Activated T-helper 1 cell treated with anti-CD3 and anti-CD28 coated beads, Interleukin-12 subunit alpha, Interleukin-12 subunit beta, Interleukin-2, Interleukin-4 antibody, amounts not matched to agents 30 ng/mL and 10 ng/mL and 1 ng/mL, durations not matched to agents 14 hours and 24 hours and 36 hours (primary cell): ENCODE measurements at regions of chr5 and their contacts with region 1.

Region 1: DNA sequence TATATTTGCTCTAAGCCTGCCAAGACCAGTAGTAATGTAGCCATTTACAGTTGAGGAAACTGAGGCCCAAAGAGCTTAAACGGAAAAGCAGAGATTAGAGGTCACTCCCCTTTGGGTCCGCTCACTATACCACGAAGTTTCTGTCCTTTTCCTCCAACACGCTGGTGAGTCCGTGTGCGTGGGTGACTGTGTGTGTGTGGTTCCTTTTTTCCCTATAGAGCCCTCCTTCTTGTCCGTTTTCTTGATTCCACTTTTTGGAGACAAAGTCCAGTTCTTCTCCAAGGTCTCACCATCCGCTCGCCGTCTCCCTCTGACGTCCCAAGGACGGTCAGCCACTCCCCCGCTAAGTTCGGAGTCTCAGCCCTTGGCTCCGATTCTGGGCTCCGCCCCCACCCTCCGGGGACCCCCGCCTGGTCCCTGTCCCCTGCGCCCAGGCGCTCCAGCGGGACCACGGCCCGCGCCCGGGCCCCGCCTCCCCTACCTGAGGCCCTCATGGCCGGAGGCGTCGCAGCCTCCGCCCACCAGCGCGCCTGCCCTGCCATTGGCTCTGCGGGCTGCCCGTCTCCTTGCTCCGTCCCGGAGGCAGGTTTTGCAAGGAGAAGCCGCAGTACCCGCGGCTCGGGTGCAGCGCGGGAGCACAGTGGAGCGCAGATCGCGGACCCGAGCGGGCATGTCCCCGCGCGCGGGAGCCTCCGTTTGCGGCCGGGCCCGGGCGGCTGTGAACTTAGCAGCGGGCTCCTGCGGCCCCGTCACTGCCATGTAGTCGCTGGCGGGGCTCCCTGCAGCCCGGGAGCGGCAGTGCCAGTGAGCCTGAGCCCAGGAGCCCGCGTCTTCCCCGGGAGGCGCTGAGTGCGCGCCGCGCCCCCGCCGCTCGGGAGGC is at the start of gene MAST4:
- DNase-seq: peak; percentile 80
- H3K4me3 Mint-ChIP-seq: peak within 1 kb of the TSS; percentile 87
- H3K27ac Mint-ChIP-seq: peak within 1 kb of the TSS; percentile 56
- H3K4me1 Mint-ChIP-seq: peaks cover 34% of the 10 kb centered on the region
- H3K27me3 Mint-ChIP-seq: peaks cover 56% of the 10 kb centered on the region
- total RNA-seq, gene MAST4: 18.4 and 19.0 TPM in 2 replicates

Region 2: DNA sequence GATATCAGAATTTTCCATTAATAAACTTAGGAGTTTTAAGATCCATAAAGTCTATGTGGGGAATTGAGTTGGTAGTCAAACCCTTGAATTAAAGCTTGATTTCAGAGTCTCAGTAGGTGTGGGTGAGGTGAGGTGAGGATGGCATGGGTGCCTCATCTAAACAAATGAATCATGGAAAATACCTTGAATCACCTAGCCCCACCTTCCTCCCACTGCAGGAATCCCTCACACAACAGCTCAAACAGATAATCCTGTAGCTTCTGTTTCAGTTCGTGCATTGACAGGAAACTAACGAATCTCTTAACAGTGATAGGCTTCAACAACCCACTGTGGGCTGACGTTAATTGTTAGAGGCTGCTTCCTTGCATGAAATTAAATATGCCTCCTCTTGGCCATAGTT is 266.9 kb before region 1 on chr5:
- intact Hi-C with region 1: loop called (anchors 5 kb)
- DNase-seq: no peak
- H3K4me3 Mint-ChIP-seq: no peak overlapping the region
- H3K27ac Mint-ChIP-seq: no peak overlapping the region
- H3K4me1 Mint-ChIP-seq: no peaks in the 10 kb centered on the region
- H3K27me3 Mint-ChIP-seq: peaks cover 3% of the 10 kb centered on the region

Region 3: DNA sequence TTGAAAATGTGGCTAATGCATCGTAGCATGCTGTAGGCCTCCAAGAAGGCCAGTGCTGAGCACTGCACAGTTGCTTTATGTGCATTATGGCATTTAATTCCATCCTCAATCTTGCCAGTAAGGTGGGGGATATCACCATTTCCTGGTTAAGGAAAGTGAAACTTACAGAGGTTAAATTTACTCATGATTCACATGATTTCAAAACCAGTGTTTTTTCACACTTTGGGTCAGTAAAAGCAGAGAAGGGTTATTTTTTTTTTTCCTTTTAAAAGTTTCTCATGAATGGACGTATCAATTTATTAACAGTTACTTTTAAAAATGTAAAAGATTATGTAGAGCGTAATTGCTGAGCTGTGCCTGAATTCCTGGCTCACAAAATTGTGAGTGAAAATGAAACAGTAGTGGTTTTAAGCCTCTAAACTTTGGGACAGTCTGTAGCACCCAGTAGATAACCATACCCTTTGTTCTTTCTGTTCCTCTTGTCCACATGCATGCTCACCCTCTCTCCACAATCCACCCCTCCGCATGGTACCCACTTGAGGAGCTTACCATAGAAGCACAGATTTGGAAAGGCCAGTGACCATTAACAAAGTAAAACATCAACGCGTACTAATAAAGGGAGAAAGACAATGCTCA is 21.3 kb after region 1 on chr5:
- intact Hi-C with region 1: loop called (anchors 1 kb)
- DNase-seq: no peak
- H3K4me3 Mint-ChIP-seq: peak overlapping the region; percentile 52
- H3K27ac Mint-ChIP-seq: peak overlapping the region; percentile 69
- H3K4me1 Mint-ChIP-seq: peaks cover 57% of the 10 kb centered on the region
- H3K27me3 Mint-ChIP-seq: peaks cover 11% of the 10 kb centered on the region

Region 4: GRCh38 chr5:66697791-66698564 is 102.0 kb after region 1 on chr5:
- intact Hi-C with region 1: no loop called
- DNase-seq: no peak
- H3K4me3 Mint-ChIP-seq: no peak overlapping the region
- H3K27ac Mint-ChIP-seq: no peak overlapping the region
- H3K4me1 Mint-ChIP-seq: peaks cover 5% of the 10 kb centered on the region
- H3K27me3 Mint-ChIP-seq: peaks cover 18% of the 10 kb centered on the region